ENCODE measurements at regions of chr17 and their contacts with region 1.

Region 1: GRCh38 chr17:82897514-82898249 is 57.9 kb upstream of the ZNF750 start:
- DNase-seq: no peak
- ATAC-seq: no peak
- H3K4me3 ChIP-seq: no peak overlapping the region
- H3K27ac ChIP-seq: no peak overlapping the region
- H3K4me1 ChIP-seq: no peaks in the 10 kb centered on the region
- H3K27me3 ChIP-seq: no peaks in the 10 kb centered on the region
- CTCF ChIP-seq: peak; percentile 37; the same call in 1 of the 2 replicates

Region 2: GRCh38 chr17:82848022-82848592 is 49.6 kb before region 1 on chr17:
- CTCF ChIA-PET with region 1: no interaction called
- POLR2A ChIA-PET with region 1: interaction called, 11 read pairs
- intact Hi-C with region 1: no loop called
- DNase-seq: no peak
- ATAC-seq: no peak
- H3K4me3 ChIP-seq: no peak overlapping the region
- H3K27ac ChIP-seq: no peak overlapping the region
- H3K4me1 ChIP-seq: no peaks in the 10 kb centered on the region
- H3K27me3 ChIP-seq: no peaks in the 10 kb centered on the region
- CTCF ChIP-seq: no peak

Region 3: DNA sequence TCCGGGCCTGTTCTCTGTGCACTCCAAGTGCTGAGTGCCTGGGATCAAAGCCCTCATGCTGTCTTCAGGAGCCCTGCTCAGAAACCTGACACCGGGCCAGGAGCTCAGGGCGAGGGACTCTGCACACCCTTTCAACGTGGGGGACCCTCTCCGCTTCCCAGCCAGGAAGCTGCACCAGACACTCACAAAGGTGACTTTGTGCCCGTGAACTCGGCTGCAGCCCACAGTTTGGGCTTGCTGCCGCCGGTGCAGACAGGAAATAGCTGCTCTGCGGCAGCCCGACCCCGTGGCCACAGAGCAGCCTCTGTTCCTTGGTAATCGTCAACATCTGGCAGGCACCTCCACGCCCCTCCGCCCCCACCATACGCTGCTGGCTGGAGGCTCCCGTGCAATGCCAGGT is 88.3 kb after region 1 on chr17:
- CTCF ChIA-PET with region 1: no interaction called
- POLR2A ChIA-PET with region 1: no interaction called
- intact Hi-C with region 1: no loop called
- DNase-seq: no peak
- ATAC-seq: no peak
- H3K4me3 ChIP-seq: no peak overlapping the region
- H3K27ac ChIP-seq: no peak overlapping the region
- H3K4me1 ChIP-seq: no peaks in the 10 kb centered on the region
- H3K27me3 ChIP-seq: no peaks in the 10 kb centered on the region
- CTCF ChIP-seq: no peak

Measured in PC-3 (cell line).